Activated CD4-positive, alpha-beta T cell treated with anti-CD3 and anti-CD28 coated beads for 36 hours (primary cell): ENCODE measurements at regions of chr17 and their contacts with region 1.

Region 1: DNA sequence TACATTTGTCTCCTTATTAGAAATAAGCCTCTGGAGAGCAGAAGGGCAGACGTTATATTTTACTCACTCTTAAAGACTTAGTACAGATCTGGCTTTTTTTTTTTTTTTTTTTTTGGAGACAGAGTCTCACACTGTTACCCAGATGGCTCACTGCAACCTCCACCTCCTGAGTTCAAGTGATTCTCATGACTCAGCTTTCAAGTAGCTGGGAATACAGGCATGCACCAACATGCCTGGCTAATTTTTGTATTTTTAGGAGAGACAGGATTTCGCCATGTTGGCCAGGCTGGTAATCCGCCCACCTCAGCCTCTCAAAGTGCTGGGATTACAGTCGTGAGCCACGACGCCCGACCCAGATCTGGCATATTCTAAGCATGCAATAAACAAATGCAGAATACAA is 36.4 kb upstream of the TMEM97 start:
- DNase-seq: no peak
- ATAC-seq: no peak
- H3K4me3 Mint-ChIP-seq: no peak overlapping the region
- H3K27ac Mint-ChIP-seq: no peak overlapping the region
- H3K4me1 Mint-ChIP-seq: peaks cover 10% of the 10 kb centered on the region
- H3K27me3 Mint-ChIP-seq: peaks cover 12% of the 10 kb centered on the region

Region 2: GRCh38 chr17:28295677-28296578 is 13.3 kb after region 1 on chr17:
- CTCF ChIA-PET with region 1: interaction called, 3 read pairs
- POLR2A ChIA-PET with region 1: interaction called, 3 read pairs
- intact Hi-C with region 1: loop called in 1 of 2 experiments (anchors 1 kb)
- DNase-seq: no peak
- ATAC-seq: peak; percentile 86
- H3K4me3 Mint-ChIP-seq: no peak overlapping the region
- H3K27ac Mint-ChIP-seq: peak overlapping the region; percentile 76
- H3K4me1 Mint-ChIP-seq: peaks cover 15% of the 10 kb centered on the region
- H3K27me3 Mint-ChIP-seq: peaks cover 10% of the 10 kb centered on the region

Region 3: GRCh38 chr17:28327031-28327607 is 44.5 kb after region 1 on chr17:
- CTCF ChIA-PET with region 1: no interaction called
- POLR2A ChIA-PET with region 1: no interaction called
- intact Hi-C with region 1: loop called in 1 of 2 experiments (anchors 1 kb)
- DNase-seq: peak; percentile 52
- ATAC-seq: peak; percentile 98
- H3K4me3 Mint-ChIP-seq: no peak overlapping the region
- H3K27ac Mint-ChIP-seq: peak overlapping the region; percentile 19
- H3K4me1 Mint-ChIP-seq: peaks cover 29% of the 10 kb centered on the region
- H3K27me3 Mint-ChIP-seq: no peaks in the 10 kb centered on the region